ENCODE measurements at regions of chrX and their contacts with region 1.

Region 1: DNA sequence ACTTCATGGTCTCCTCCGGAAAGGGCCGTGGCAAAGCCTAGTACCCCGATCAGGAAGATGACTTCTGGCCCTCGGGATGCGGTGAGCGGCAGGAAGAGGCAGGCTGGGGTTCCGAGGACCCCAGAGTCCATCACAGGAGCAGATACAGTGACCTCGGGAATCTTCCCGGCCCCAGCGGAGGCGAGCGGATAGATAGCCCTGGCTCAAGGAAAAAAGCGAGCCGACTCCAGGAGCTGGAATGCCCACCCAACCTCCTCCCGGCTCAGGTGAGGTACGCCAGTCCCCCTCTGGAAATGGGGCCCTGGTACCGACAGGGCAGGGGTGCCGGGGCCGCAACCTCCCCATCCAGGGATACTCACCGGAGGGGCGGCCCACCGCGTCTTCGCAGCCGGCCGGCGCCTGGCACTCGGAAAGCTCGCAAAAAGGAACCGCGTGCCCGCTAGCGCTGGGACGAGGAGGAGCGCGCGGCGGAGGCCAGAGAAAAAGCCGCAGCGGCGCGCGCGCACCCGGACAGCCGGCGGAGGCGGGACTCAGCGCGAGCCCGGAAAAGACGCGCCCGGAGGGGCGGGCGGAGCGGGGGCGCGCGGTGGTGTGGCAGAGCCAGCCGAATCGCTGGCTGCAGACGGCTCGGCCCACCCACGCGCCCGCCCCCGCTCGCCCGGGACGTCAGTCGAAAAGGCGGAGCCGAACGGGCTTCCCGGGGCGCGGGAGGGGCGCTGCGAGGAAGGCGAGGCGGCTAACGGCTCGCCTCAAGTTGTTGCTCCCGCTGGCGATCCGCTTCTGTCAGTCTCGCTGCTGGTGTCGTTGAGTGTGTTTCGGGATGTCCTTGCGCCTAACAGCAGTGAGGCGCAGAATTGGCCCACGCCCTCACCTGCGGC is at the start of gene ACSL4:
- DNase-seq: peak; percentile 83 to 87 (median 85)
- H3K4me3 ChIP-seq: peak within 1 kb of the TSS; percentile 72 to 78
- H3K4me3 Mint-ChIP-seq: peak within 1 kb of the TSS; percentile 91 to 99 (median 96)
- H3K27ac ChIP-seq: peak within 1 kb of the TSS; percentile 66
- H3K27ac Mint-ChIP-seq: peak within 1 kb of the TSS; percentile 93 to 98 (median 97)
- H3K4me1 ChIP-seq: peaks cover 24% of the 10 kb centered on the region
- H3K4me1 Mint-ChIP-seq: peaks cover 14 to 44% (median 27%) of the 10 kb centered on the region in 4 donors
- H3K27me3 ChIP-seq: no peaks in the 10 kb centered on the region
- H3K27me3 Mint-ChIP-seq: no peaks in the 10 kb centered on the region
- total RNA-seq, gene ACSL4: 21.4 to 24.3 TPM

Region 2: GRCh38 chrX:109536439-109537336 is 196.3 kb before region 1 on chrX and contains the start of gene NXT2:
- CTCF ChIA-PET with region 1: no interaction called
- POLR2A ChIA-PET with region 1: interaction called, 4 read pairs
- intact Hi-C with region 1: loop called (anchors 1 kb)
- DNase-seq: peak; percentile 86 to 90 (median 88)
- H3K4me3 ChIP-seq: peak within 1 kb of the TSS; percentile 71 to 78
- H3K4me3 Mint-ChIP-seq: peak within 1 kb of the TSS; percentile 87 to 98 (median 95)
- H3K27ac ChIP-seq: peak within 1 kb of the TSS; percentile 78
- H3K27ac Mint-ChIP-seq: peak within 1 kb of the TSS; percentile 92 to 99 (median 98)
- H3K4me1 ChIP-seq: peaks cover 13% of the 10 kb centered on the region
- H3K4me1 Mint-ChIP-seq: peaks cover 3 to 19% (median 12%) of the 10 kb centered on the region in 4 donors
- H3K27me3 ChIP-seq: no peaks in the 10 kb centered on the region
- H3K27me3 Mint-ChIP-seq: peaks cover 4 to 9% of the 10 kb centered on the region in 2 donors
- total RNA-seq, gene NXT2: 6.2 to 6.3 TPM

Region 3: DNA sequence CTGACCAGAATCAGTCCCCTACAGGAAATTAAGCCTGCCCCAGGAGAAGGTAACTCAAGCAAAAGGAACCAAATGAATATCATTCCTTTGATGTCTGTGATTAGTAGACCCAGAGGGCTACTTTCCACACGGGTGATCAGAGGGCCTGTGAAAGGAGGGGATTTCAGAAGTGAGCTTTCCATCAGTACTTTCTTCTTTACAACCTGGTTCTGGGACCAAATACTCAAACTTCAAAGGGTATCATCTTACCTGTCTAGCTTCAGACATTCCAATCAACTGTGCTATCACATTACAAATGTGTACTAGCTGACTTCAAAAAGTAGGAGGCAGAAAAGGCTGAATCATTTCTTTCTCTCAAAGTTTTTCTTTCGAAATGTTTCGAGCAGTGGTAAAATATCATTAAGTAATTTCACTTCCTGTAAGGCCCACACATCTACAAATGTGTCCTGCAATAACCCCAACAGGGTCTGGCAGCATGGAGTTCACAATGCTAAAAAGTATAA is 23.8 kb before region 1 on chrX:
- CTCF ChIA-PET with region 1: interaction called, 10 read pairs
- POLR2A ChIA-PET with region 1: interaction called, 4 read pairs
- intact Hi-C with region 1: no loop called
- DNase-seq: no peak
- H3K4me3 ChIP-seq: no peak overlapping the region
- H3K4me3 Mint-ChIP-seq: peak overlapping the region in 5 of 8 donors; percentile 8 to 65 (median 47)
- H3K27ac ChIP-seq: no peak overlapping the region
- H3K27ac Mint-ChIP-seq: peak overlapping the region in 3 of 7 donors; percentile 5 to 69 (median 61)
- H3K4me1 ChIP-seq: peaks cover 26% of the 10 kb centered on the region
- H3K4me1 Mint-ChIP-seq: peaks cover 25 to 57% (median 41%) of the 10 kb centered on the region in 4 donors
- H3K27me3 ChIP-seq: no peaks in the 10 kb centered on the region
- H3K27me3 Mint-ChIP-seq: no peaks in the 10 kb centered on the region

Region 4: DNA sequence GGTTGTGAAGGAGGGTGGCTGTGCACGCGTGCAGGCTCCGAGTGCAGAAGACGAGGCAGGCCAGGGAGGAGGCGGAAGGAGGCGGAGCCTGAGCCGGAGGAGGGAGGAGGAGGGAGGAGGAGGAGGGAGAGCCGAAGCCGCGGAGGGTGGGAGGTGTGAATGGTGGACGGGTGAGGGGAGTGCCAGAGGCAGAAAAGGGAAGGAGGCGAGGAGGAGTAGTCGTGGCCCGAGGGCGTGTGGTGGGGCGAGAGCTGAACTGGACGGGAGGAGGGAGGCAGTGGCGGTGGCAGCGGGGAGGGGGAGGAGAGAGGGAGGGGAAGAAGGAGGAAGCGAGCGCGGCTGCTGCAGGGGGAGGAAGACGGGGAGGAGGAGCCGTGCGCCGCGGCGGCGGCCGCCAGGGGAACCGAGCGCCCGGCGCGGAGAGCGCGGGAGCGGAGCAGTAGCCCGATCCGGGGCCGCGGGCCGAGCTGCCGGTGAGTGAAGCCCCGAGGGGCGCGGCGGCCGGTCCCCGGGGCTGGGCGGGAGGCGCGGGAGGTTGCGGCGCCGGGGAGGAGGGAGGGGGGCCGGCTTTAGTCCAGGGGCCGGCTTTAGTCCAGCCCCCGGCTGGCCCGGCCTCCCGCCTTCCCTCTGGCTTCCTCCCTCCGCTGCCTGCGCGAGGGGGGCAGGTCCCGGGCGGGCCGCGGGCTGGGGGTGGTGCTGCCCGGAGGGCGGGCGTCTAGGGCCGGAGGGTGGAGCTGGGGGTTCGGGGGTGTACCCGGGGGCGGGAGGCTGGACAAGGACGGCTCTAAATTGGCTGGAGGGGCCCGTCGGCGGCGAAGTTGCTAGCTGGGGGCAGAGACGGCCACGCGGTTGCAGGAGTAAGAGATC is 269.5 kb after region 1 on chrX and contains the start of gene TMEM164:
- CTCF ChIA-PET with region 1: no interaction called
- POLR2A ChIA-PET with region 1: no interaction called
- intact Hi-C with region 1: loop called (anchors 5 kb)
- DNase-seq: peak; percentile 74 to 85 (median 81)
- H3K4me3 ChIP-seq: peak within 1 kb of the TSS in 1 of 2 donors; percentile 60
- H3K4me3 Mint-ChIP-seq: peak within 1 kb of the TSS; percentile 86 to 99 (median 89)
- H3K27ac ChIP-seq: peak within 1 kb of the TSS; percentile 43
- H3K27ac Mint-ChIP-seq: peak within 1 kb of the TSS; percentile 80 to 94 (median 92)
- H3K4me1 ChIP-seq: peaks cover 35% of the 10 kb centered on the region
- H3K4me1 Mint-ChIP-seq: peaks cover 19 to 48% (median 32%) of the 10 kb centered on the region in 4 donors
- H3K27me3 ChIP-seq: no peaks in the 10 kb centered on the region
- H3K27me3 Mint-ChIP-seq: no peaks in the 10 kb centered on the region
- total RNA-seq, gene TMEM164: 16.8 to 17.2 TPM

Measured in CD4-positive, alpha-beta memory T cell (primary cell).